Spleen (tissue), 13 donors: ENCODE measurements at regions of chr2 and their contacts with region 1.

Region 1: DNA sequence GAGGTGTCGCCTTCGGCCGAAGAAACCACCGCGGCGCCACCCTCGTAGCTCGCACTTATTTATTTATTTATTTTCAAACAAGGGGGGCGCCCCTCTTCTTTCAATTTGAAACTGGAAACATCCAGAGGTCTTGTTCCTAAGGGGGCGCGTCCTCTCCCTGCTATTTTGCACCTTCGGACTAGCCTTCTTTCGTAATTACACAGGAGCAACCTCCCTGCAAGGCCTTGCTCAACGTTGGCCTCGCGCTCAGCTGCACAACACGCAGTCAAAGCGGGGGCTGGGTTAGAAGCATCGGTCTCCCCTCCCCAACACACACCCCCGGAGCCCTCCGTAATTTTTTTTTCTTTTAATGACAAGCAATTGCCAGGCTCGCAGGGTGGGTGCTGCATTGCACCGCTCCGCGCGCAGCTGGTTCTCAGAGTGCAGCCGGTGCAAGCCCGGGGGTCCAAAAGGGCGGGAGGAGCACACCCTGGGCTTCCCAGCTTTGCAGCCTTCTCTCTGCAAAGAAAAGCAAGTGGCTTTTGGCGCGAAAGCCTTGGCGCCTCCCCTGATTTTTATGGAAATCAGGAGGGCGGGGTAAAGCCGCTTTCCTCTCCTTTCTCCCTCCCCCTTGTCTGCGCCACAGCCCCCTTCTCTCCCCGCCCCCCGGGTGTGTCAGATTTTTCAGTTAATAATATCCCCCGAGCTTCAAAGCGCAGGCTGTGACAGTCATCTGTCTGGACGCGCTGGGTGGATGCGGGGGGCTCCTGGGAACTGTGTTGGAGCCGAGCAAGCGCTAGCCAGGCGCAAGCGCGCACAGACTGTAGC is at the start of gene MYCN:
- DNase-seq: no peak
- H3K4me3 ChIP-seq: peak within 1 kb of the TSS; percentile 16 to 64 (median 39)
- H3K27ac ChIP-seq: no peak within 1 kb of the TSS
- H3K4me1 ChIP-seq: peaks cover 36 to 57% (median 45%) of the 10 kb centered on the region in 6 donors
- H3K27me3 ChIP-seq: peaks cover 0 to 78% (median 40%) of the 10 kb centered on the region in 7 donors
- CTCF ChIP-seq: peak in 1 of 11 experiments; percentile 66
- POLR2A ChIP-seq: no peak
- total RNA-seq, gene MYCN: 0.29 to 1.3 (median 0.58) TPM in 5 of 7 donors, not detected in the others

Region 2: DNA sequence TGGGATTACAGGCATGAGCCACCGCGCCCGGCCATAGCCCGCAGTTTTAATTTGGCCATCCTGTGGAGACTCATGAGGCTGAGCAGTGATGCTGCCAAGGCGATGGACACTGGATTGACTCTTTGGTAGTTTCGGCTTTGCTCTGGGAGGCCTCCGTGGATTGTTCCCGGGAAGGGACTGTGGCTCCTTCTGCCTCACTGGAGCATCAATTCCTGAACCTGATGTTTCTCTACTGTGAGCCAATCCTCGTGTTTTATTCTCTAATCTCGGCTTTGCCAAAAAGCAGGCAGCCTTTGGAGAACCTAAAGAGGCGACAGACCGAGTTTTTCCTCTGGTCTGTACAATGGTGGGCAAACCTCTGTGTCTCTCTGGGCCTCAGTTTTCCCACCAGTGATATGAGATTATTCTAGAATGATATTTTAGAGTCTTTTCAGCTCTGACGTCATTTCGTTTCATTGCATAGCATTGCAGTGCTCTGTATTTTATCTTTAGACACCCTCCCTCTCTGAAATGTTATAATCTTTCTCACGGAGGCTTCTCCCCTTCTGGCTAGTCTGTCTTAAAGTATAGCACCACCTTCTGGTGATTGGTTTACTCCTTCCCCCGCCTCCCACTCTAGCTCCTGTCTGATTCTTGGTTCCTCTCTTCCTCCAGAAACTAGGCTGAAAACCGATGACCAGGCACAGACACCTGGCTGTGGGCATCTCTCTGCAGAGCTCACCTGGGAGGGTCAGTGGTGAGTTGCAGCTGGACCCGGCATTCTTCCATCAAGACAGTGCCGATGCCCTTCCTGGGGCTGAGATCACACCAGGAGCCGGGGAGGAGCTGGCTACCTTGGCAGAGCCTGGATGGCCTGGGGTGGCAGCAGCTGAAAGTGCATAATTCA is 341.6 kb after region 1 on chr2:
- intact Hi-C with region 1: loop called (anchors 5 kb)
- DNase-seq: no peak
- H3K4me3 ChIP-seq: no peak overlapping the region
- H3K27ac ChIP-seq: no peak overlapping the region
- H3K4me1 ChIP-seq: peaks cover 0 to 9% (median 2%) of the 10 kb centered on the region in 6 donors
- H3K27me3 ChIP-seq: no peaks in the 10 kb centered on the region
- CTCF ChIP-seq: peak in 9 of 11 experiments; percentile 14 to 62 (median 41)
- POLR2A ChIP-seq: no peak

Region 3: GRCh38 chr2:16507655-16508489 is 567.8 kb after region 1 on chr2:
- intact Hi-C with region 1: loop called (anchors 10 kb)
- DNase-seq: no peak
- H3K4me3 ChIP-seq: peak overlapping the region in 6 of 8 donors; percentile 28 to 60 (median 35)
- H3K27ac ChIP-seq: no peak overlapping the region
- H3K4me1 ChIP-seq: peaks cover 0 to 11% (median 8%) of the 10 kb centered on the region in 6 donors
- H3K27me3 ChIP-seq: peaks cover 0 to 75% (median 30%) of the 10 kb centered on the region in 7 donors
- CTCF ChIP-seq: peak in 9 of 11 experiments; percentile 16 to 73 (median 49)
- POLR2A ChIP-seq: no peak